Panc1 (cell line): ENCODE measurements at regions of chr2 and their contacts with region 1.

Region 1: GRCh38 chr2:217785544-217786045 is 217.2 kb downstream of the TNS1 start:
- DNase-seq: peak; percentile 54
- ATAC-seq: peak; percentile 93
- H3K4me3 ChIP-seq: no peak overlapping the region
- H3K27ac ChIP-seq: no peak overlapping the region
- H3K4me1 ChIP-seq: no peaks in the 10 kb centered on the region
- H3K27me3 ChIP-seq: peaks cover 3% of the 10 kb centered on the region; the same call in 1 of the 2 replicates
- CTCF ChIP-seq: peak; percentile 94

Region 2: GRCh38 chr2:217886720-217887309 is 101.2 kb after region 1 on chr2:
- CTCF ChIA-PET with region 1: interaction called, 6 read pairs
- POLR2A ChIA-PET with region 1: no interaction called
- in situ Hi-C with region 1: no loop called
- intact Hi-C with region 1: loop called (anchors 1 kb)
- DNase-seq: peak; percentile 36
- ATAC-seq: peak; percentile 84
- H3K4me3 ChIP-seq: no peak overlapping the region
- H3K27ac ChIP-seq: no peak overlapping the region
- H3K4me1 ChIP-seq: no peaks in the 10 kb centered on the region
- H3K27me3 ChIP-seq: no peaks in the 10 kb centered on the region; the same call in 1 of the 2 replicates
- CTCF ChIP-seq: peak; percentile 88

Region 3: GRCh38 chr2:217988014-217988839 is 202.6 kb after region 1 on chr2:
- CTCF ChIA-PET with region 1: interaction called, 18 read pairs
- POLR2A ChIA-PET with region 1: no interaction called
- in situ Hi-C with region 1: no loop called
- intact Hi-C with region 1: loop called (anchors 1 kb)
- DNase-seq: no peak
- ATAC-seq: peak; percentile 90
- H3K4me3 ChIP-seq: no peak overlapping the region
- H3K27ac ChIP-seq: no peak overlapping the region
- H3K4me1 ChIP-seq: no peaks in the 10 kb centered on the region
- H3K27me3 ChIP-seq: peaks cover 4% of the 10 kb centered on the region; the same call in 1 of the 2 replicates
- CTCF ChIP-seq: peak; percentile 92

Region 4: GRCh38 chr2:217993817-217994463 is 208.3 kb after region 1 on chr2:
- CTCF ChIA-PET with region 1: interaction called, 18 read pairs
- POLR2A ChIA-PET with region 1: no interaction called
- in situ Hi-C with region 1: no loop called
- intact Hi-C with region 1: no loop called
- DNase-seq: no peak
- ATAC-seq: peak; percentile 90
- H3K4me3 ChIP-seq: peak overlapping the region in 1 of 2 experiments; percentile 18; a peak in 1 of 4 replicates
- H3K27ac ChIP-seq: no peak overlapping the region
- H3K4me1 ChIP-seq: 0 out of 2 replicates have a peak, but pooled peaks cover 3% of the 10 kb centered on the region
- H3K27me3 ChIP-seq: peaks cover 9% of the 10 kb centered on the region; the same call in 1 of the 2 replicates
- CTCF ChIP-seq: peak; percentile 94

Region 5: GRCh38 chr2:218033590-218034496 is 248.2 kb after region 1 on chr2:
- CTCF ChIA-PET with region 1: interaction called, 9 read pairs
- POLR2A ChIA-PET with region 1: no interaction called
- in situ Hi-C with region 1: no loop called
- intact Hi-C with region 1: loop called (anchors 5 kb)
- DNase-seq: no peak
- ATAC-seq: peak; percentile 32
- H3K4me3 ChIP-seq: no peak overlapping the region
- H3K27ac ChIP-seq: no peak overlapping the region
- H3K4me1 ChIP-seq: no peaks in the 10 kb centered on the region; the same call in 1 of the 2 replicates
- H3K27me3 ChIP-seq: peaks cover 10% of the 10 kb centered on the region
- CTCF ChIP-seq: no peak

Region 6: DNA sequence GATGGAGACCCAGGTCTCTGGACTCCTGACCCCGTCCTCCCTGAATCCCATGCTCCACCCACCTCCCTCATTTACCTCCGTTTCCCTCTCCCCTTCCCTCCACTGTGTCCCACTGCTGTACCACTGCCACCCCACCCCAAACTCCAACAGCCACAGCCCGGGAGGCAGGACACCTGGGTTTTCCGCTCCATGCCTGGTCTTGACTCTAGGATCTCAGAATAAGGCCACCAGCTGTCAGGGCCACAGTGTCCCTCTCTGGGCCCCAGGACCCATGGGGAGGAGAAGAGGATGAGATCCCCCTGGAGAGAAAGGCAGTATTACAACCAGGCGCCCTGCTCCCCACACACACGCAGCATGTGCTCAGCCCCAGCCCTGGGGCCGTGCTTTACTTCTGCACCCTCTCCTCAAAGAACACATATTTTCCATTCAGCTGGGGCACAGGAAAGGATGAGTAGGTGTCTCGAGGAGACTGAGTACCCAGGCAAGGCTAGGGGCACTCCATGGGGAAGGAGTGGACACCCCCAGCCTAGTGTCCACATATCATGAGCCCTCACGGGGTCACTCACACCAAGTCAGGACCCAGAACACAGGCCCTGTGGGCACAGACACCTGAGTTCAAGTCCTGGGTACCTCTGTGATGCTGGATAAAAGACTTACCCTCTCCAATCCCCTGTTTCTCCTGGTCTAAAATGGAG is 284.2 kb after region 1 on chr2:
- CTCF ChIA-PET with region 1: interaction called, 5 read pairs
- POLR2A ChIA-PET with region 1: no interaction called
- in situ Hi-C with region 1: no loop called
- intact Hi-C with region 1: loop called (anchors 2 kb)
- DNase-seq: no peak
- ATAC-seq: no peak
- H3K4me3 ChIP-seq: no peak overlapping the region
- H3K27ac ChIP-seq: no peak overlapping the region
- H3K4me1 ChIP-seq: no peaks in the 10 kb centered on the region
- H3K27me3 ChIP-seq: no peaks in the 10 kb centered on the region
- CTCF ChIP-seq: no peak